Activated CD8-positive, alpha-beta memory T cell treated with anti-CD3 and anti-CD28 coated beads, Interleukin-2, amount 10 ng/mL, durations not matched to agents 7 days and 5 days (primary cell): ENCODE measurements at regions of chr1 and their contacts with region 1.

Region 1: DNA sequence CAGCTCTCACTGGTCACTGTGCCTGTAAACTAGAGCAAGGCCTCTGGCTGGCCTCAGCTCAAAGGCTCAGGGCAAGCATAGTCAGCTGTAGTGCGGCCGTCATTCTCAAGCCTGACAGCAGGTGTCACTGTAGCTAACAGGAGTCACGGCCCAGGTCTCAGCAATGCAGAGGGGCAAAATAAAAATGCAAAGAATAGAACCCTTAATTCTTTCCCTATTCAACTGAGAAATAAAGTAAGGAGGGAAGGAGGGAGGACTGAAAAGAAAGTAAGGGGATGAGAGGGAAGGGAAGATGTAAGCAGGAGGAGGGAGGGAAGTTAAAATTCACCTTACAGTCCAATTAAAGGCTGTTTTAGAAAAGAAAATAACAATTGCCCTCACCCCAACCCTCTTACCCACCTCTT is 106.1 kb downstream of the KIAA0319L start:
- DNase-seq: peak; percentile 86
- ATAC-seq: peak; percentile 93
- H3K4me3 Mint-ChIP-seq: no peak overlapping the region
- H3K27ac Mint-ChIP-seq: peak overlapping the region; percentile 36
- H3K4me1 Mint-ChIP-seq: peaks cover 17% of the 10 kb centered on the region
- H3K27me3 Mint-ChIP-seq: no peaks in the 10 kb centered on the region

Region 2: GRCh38 chr1:35505908-35506798 is 55.0 kb after region 1 on chr1:
- CTCF ChIA-PET with region 1: interaction called, 14 read pairs
- DNase-seq: peak; percentile 87
- ATAC-seq: peak; percentile 85
- H3K4me3 Mint-ChIP-seq: peak overlapping the region; percentile 38
- H3K27ac Mint-ChIP-seq: peak overlapping the region; percentile 95
- H3K4me1 Mint-ChIP-seq: peaks cover 46% of the 10 kb centered on the region
- H3K27me3 Mint-ChIP-seq: no peaks in the 10 kb centered on the region

Region 3: GRCh38 chr1:35539073-35539823 is 88.1 kb after region 1 on chr1:
- CTCF ChIA-PET with region 1: interaction called, 39 read pairs
- DNase-seq: peak; percentile 73
- ATAC-seq: peak; percentile 93
- H3K4me3 Mint-ChIP-seq: peak overlapping the region; percentile 69
- H3K27ac Mint-ChIP-seq: peak overlapping the region; percentile 95
- H3K4me1 Mint-ChIP-seq: peaks cover 56% of the 10 kb centered on the region
- H3K27me3 Mint-ChIP-seq: no peaks in the 10 kb centered on the region

Region 4: DNA sequence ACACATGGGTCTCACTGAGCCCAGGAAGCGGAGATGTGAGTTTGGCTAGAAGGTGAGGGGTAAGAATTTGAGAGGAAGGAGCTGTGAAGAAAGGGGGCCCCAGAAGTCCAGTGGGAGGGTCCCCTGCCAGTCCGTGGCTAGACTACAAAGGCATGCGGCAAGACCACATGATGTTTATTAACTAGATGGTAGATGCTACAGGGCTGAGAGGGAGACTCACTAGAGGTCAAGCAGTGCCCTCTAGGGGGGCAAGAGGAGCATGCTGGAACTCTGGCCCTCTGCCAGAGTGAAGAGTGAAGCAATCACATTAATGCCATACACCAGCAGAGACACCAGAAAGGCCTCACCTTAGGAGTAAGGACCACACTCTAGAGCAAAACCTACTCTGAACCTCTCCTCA is 93.9 kb after region 1 on chr1:
- CTCF ChIA-PET with region 1: interaction called, 39 read pairs
- DNase-seq: peak; percentile 67
- ATAC-seq: peak; percentile 88
- H3K4me3 Mint-ChIP-seq: no peak overlapping the region
- H3K27ac Mint-ChIP-seq: no peak overlapping the region
- H3K4me1 Mint-ChIP-seq: peaks cover 32% of the 10 kb centered on the region
- H3K27me3 Mint-ChIP-seq: no peaks in the 10 kb centered on the region

Region 5: GRCh38 chr1:35557292-35558063 is 106.4 kb after region 1 on chr1 and contains the starts of genes KIAA0319L and NCDN:
- CTCF ChIA-PET with region 1: interaction called, 41 read pairs
- DNase-seq: peak; percentile 99
- ATAC-seq: peak; percentile 94
- H3K4me3 Mint-ChIP-seq: peak within 1 kb of the TSS; percentile 93
- H3K27ac Mint-ChIP-seq: peak within 1 kb of the TSS; percentile 95
- H3K4me1 Mint-ChIP-seq: peaks cover 34% of the 10 kb centered on the region
- H3K27me3 Mint-ChIP-seq: no peaks in the 10 kb centered on the region
- total RNA-seq, gene KIAA0319L: 36.0 to 45.7 TPM
- total RNA-seq, gene NCDN: 20.1 to 31.7 TPM